ENCODE measurements at regions of chr5 and their contacts with region 1.

Region 1: DNA sequence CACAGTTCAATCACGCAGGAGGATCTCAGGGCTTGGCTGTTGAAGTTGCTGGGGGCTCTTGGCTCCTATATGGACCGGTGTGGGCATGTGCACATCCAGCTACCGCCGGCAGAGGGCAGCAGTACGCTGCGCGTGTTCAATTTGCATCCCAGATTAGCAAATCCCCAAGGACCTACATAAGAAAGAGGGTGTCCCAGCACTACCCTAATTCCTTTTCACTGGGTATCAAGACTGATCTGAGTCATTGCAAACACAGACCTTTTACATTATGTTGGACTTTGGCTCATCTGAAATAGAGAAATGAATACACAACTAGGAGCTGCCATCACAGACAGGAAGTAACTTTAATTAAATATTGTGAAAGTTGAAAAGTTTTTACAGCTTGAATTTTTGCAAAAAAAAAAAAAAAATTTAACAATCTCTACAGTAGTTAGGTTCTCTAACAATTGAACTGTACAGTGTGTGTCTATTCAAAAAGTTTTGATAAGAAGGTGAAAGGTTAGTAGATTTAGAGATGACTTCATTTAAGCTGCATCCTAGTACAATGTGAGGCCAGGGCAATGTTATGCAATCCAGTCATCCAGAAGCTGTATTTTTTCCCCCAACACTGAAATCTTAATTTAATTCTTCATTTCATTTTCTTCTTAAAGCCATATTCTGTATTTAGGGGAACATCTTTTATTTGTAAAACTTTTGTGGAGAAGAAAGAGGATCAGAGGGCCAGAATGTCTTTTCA is 404.0 kb downstream of the EBF1 start:
- DNase-seq: peak; percentile 67 to 78
- ATAC-seq: peak; percentile 79 to 89 (median 84)
- H3K4me3 ChIP-seq: no peak overlapping the region
- H3K27ac ChIP-seq: no peak overlapping the region
- H3K4me1 ChIP-seq: no peaks in the 10 kb centered on the region
- H3K27me3 ChIP-seq: peaks cover 0 to 3% (median 0%) of the 10 kb centered on the region in 3 donors
- CTCF ChIP-seq: peak; percentile 96

Region 2: DNA sequence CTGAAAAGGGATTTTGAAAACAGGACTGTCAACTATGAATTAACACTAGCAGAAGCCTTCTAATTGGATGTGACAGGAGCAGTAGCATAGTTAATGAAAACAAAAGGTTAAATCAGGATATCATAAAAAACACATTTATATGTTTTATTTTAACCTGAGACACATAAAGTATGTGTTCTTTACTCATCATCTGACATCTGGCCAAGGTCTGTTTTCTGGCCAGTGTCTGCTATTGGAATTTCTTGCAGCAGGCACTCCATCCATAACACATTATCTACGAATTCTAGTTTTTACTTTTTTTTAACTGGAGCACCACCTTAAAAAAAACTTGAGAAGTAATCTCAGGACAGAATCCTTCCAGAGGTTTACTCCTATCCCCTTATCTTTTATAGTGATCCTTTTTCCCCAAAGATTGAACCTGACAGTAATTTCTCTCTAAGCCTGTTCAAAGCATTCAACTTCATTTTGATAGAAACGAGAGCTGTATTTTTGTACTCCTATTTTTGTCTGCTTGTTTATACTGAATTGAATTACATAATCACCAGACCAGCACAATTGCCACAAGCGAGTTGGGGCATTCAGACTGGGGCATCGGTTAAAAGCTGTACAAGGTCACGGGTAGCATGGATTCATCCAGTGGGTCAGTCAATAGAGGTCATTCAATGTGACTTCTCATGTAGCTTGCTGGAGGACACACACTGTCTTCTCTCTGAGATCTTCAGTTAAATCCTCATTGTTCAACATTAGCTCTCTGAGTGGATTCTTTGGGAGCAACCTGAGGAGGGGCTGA is 631.2 kb before region 1 on chr5:
- intact Hi-C with region 1: loop called in 1 of 2 experiments (anchors 5 kb)
- DNase-seq: no peak
- ATAC-seq: no peak
- H3K4me3 ChIP-seq: no peak overlapping the region
- H3K27ac ChIP-seq: no peak overlapping the region
- H3K4me1 ChIP-seq: no peaks in the 10 kb centered on the region
- H3K27me3 ChIP-seq: no peaks in the 10 kb centered on the region
- CTCF ChIP-seq: no peak

Region 3: DNA sequence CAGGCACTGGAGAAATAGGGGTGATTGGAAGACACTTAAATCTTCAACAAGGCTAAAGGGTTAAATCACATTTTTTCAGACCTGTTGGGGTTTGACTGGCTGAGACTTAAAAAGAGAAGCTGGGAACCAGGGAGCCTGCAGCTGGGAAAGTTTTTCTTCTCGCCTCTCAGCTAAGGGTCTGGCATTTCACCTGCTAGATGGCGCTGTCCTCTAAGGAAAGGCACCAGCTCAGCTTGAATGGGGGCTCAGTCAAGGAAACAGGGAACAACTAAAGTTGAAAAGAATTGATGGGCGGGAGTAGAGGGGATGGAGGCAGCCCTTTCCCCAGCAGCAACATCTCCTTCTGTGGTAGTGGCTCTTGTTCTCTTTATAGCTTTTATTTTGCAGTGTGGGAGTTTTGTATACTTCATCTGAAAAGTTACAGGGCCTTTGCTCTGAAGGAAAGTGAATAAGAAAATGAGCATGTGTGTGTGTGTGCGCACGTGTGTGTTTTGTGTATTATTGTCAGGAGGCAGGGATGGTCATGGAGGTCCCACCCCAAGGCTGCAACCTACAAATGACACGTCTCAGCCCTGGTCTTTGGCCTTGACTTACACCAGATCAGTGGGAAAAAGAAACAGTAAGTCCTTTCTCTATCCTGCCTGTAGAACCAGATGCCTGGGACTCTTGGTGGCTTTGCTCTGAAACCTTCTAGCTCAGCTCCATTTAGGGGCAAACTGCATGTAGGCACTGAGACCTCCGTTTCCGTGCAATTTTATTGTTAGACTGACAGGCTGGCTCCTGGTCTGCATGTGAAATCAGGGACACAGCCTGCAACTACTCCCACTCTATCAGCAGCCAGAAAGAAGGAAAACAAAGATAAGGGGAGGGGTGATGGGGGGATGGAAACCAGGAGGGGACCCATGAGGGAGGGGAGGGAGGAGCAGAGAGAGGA is 520.6 kb before region 1 on chr5:
- intact Hi-C with region 1: loop called in 1 of 2 experiments (anchors 5 kb)
- DNase-seq: peak; percentile 67 to 76
- ATAC-seq: peak in 3 of 4 donors; percentile 52 to 78 (median 67)
- H3K4me3 ChIP-seq: no peak overlapping the region
- H3K27ac ChIP-seq: no peak overlapping the region
- H3K4me1 ChIP-seq: no peaks in the 10 kb centered on the region
- H3K27me3 ChIP-seq: no peaks in the 10 kb centered on the region
- CTCF ChIP-seq: peak; percentile 64

Region 4: GRCh38 chr5:158679221-158679641 is 16.5 kb before region 1 on chr5:
- intact Hi-C with region 1: no loop called
- DNase-seq: no peak
- ATAC-seq: peak in 1 of 4 donors; percentile 19
- H3K4me3 ChIP-seq: no peak overlapping the region
- H3K27ac ChIP-seq: no peak overlapping the region
- H3K4me1 ChIP-seq: no peaks in the 10 kb centered on the region
- H3K27me3 ChIP-seq: no peaks in the 10 kb centered on the region
- CTCF ChIP-seq: no peak

Region 5: DNA sequence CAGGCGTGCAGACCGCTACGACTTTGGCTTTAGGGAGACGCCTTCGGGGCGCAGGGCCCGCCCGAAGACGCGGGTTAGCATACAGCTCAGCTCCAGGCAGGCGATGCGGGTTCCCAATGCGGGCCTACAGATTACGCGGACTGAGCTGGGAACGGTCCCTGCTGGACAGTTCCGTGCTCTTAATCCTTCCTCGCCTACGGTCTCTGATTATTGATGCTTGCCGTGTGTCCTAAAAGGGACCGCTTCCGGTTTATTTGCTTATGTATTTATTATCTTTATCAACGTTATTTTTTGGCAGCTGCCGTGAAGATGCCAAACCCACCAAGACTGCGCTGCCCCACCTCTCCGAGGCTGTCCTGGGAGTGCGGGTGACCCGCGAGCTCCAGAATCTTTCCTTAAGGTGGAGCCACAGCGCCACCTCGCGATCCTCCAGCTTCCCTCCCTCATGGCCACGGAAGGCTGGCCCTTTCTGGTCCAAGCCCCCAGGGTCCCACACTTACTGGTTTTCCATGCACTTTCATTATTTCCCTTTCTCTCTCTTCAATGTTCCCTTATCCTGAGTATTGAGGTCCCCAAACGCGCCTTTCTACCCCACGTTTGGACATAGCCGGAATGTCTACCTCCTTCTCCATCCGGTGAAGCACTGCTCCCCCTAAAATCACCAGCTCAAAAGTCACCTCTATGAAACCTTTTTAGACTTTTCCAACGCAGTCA is 411.0 kb after region 1 on chr5:
- intact Hi-C with region 1: loop called (anchors 2 kb)
- DNase-seq: peak; percentile 84 to 87
- ATAC-seq: peak; percentile 69 to 90 (median 85)
- H3K4me3 ChIP-seq: peak overlapping the region; percentile 47
- H3K27ac ChIP-seq: no peak overlapping the region
- H3K4me1 ChIP-seq: no peaks in the 10 kb centered on the region
- H3K27me3 ChIP-seq: peaks cover 8 to 82% (median 9%) of the 10 kb centered on the region in 3 donors
- CTCF ChIP-seq: peak; percentile 90

Region 6: DNA sequence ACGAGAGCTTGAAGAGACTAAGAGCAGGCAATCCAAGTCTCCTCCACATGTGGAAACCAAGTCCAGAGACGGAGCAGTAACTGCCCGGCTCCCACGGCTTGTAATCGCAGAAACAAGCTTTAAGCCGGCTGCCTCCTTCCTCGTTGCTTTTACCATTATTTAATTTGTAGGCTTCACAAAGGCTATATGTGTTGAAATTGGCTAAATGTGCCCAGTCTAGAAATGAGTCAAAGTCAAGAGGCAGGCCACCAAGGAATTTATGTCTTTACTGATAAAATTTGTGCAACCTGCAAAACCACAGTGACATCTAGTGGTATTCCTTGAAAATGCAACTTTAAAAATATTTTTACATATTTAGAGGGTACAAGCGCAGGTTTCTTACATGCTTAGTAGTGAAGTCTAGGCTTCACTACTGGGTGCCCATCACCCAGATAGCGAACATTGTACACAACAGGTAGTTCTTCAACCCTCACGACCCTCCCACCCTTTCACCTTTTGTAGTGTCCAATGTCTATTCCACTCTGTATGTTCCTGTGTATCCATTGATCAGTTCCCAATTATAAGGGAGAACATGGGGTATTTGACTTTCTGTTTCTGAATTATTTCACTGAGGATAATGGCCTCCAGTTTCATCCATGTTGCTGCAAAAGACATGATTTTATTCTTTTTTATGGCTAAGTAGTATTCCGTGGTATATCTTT is 437.4 kb after region 1 on chr5:
- intact Hi-C with region 1: loop called in 1 of 2 experiments (anchors 10 kb)
- DNase-seq: no peak
- ATAC-seq: peak in 3 of 4 donors; percentile 42 to 52 (median 46)
- H3K4me3 ChIP-seq: no peak overlapping the region
- H3K27ac ChIP-seq: no peak overlapping the region
- H3K4me1 ChIP-seq: no peaks in the 10 kb centered on the region
- H3K27me3 ChIP-seq: peaks cover 0 to 2% (median 0%) of the 10 kb centered on the region in 3 donors
- CTCF ChIP-seq: peak; percentile 81

Region 7: GRCh38 chr5:159552751-159553150 is 857.0 kb after region 1 on chr5:
- intact Hi-C with region 1: no loop called
- DNase-seq: no peak
- ATAC-seq: no peak
- H3K4me3 ChIP-seq: no peak overlapping the region
- H3K27ac ChIP-seq: no peak overlapping the region
- H3K4me1 ChIP-seq: no peaks in the 10 kb centered on the region
- H3K27me3 ChIP-seq: peaks cover 0 to 5% (median 2%) of the 10 kb centered on the region in 3 donors
- CTCF ChIP-seq: no peak

Measured in psoas muscle (tissue), 8 donors.